ENCODE measurements at regions of chr9 and their contacts with region 1.

Region 1: GRCh38 chr9:25935188-25935587 is 256.9 kb upstream of the TUSC1 start:
- DNase-seq: no peak
- ATAC-seq: no peak
- H3K4me3 ChIP-seq: no peak overlapping the region
- H3K27ac ChIP-seq: no peak overlapping the region
- H3K4me1 ChIP-seq: no peaks in the 10 kb centered on the region
- H3K27me3 ChIP-seq: no peaks in the 10 kb centered on the region
- CTCF ChIP-seq: no peak

Region 2: DNA sequence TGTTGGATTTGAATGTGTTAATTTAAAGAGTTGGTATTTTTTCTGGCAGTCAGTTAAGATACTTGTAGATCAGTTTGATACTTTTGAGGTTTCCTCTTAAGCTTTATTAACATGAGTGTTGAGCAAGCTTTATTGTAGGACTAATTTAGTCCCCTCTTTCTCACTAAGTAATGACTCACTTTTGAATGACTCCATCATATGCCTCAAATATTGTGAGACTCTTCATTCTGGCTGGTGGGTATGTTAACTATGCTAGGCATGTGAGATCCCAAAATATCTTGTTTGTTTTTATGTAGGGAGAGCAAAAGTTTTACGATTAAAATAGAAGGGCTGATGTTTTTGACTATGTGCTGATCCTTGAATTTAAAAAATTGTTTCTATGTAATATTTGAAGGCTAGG is 1745.2 kb before region 1 on chr9:
- intact Hi-C with region 1: loop called in 1 of 2 experiments (anchors 10 kb)
- DNase-seq: no peak
- ATAC-seq: no peak
- H3K4me3 ChIP-seq: no peak overlapping the region
- H3K27ac ChIP-seq: no peak overlapping the region
- H3K4me1 ChIP-seq: no peaks in the 10 kb centered on the region
- H3K27me3 ChIP-seq: no peaks in the 10 kb centered on the region
- CTCF ChIP-seq: no peak